Ovary (tissue), 10 donors: ENCODE measurements at regions of chr6 and their contacts with region 1.

Region 1: DNA sequence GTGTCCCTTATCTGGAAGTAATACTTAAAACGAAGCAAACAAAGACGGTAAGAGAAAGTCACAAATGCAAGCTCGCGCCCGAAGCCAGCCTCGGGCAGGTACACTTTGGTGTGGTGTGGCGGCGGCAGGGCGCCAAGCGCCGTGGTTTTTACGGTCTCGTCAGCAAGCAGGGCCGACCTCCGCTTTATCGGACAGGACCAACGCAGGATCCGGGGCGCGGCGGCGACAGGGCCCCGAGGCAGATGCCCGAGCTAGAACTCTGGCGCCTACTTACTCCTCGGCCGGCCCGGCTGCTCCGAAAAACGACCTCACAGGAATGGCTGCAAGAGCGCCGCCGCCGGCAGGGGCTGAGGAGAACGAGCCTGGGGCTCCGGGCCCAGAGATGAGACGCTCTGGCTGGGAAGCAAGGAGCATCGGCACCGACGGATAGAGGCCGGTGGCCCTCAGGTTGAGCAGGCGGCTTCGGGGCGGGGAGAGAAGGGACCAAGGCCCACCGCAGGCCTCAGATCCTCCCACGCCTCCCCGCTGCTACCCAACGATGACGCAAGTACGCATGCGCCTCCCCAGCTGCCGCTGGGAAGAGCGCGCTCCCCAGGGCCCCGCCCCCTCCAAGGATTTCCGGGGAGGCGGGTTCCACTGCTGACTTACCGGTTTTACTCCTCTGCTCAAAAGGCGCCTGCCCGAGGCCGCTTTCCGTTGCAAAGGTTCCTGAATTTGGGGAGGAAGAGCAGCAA is 60.6 kb downstream of the FAM217A start:
- DNase-seq: peak; percentile 95 to 96 (median 96)
- H3K4me3 ChIP-seq: peak overlapping the region; percentile 78
- H3K27ac ChIP-seq: peak overlapping the region; percentile 91 to 95
- H3K4me1 ChIP-seq: peaks cover 3% of the 10 kb centered on the region
- H3K27me3 ChIP-seq: no peaks in the 10 kb centered on the region
- CTCF ChIP-seq: peak in 2 of 3 donors; percentile 67 to 74
- EP300 ChIP-seq: no peak
- POLR2A ChIP-seq: peak; percentile 90

Region 2: GRCh38 chr6:4004249-4004648 is 14.1 kb before region 1 on chr6:
- intact Hi-C with region 1: no loop called
- DNase-seq: no peak
- H3K4me3 ChIP-seq: no peak overlapping the region
- H3K27ac ChIP-seq: no peak overlapping the region
- H3K4me1 ChIP-seq: no peaks in the 10 kb centered on the region
- H3K27me3 ChIP-seq: no peaks in the 10 kb centered on the region
- CTCF ChIP-seq: no peak
- EP300 ChIP-seq: no peak
- POLR2A ChIP-seq: no peak

Region 3: DNA sequence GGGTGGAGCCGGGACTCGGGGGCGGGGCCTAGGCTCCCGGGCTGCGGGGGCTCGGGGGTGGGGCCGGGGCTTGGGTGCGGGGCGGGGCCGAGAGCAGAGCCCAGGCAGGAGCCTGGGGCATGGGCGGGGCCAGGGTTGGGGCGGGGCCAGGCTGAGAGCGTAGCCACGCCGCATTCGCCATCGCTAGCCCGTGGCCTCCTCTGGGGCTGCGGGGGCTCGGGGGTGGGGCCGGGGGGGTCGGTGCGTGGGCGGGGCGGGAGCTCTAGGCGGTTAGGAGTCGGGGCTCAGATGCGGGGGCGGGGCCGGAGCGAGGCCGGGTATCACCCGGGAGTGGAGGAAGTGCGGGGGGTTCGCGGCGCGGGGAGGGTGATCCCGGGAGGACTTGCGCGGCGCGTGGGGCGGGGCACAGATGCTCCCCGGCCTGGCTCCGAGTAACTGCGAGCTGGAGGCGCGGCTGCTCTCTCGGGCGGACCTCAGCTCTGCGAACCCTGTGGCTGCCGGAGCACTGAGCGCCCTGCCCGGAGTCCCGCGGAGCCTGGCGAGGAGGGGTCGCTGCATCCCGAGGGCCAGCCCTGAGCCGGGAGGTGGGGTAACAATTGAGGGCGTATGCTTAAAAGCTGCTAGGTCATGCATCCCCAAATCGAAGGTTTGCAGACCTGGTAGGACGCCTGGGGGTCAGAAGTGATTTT is 117.5 kb after region 1 on chr6:
- intact Hi-C with region 1: loop called in 2 of 4 experiments (anchors 10 kb)
- DNase-seq: peak; percentile 98 to 99 (median 99)
- H3K4me3 ChIP-seq: peak overlapping the region; percentile 73
- H3K27ac ChIP-seq: peak overlapping the region; percentile 61 to 81
- H3K4me1 ChIP-seq: peaks cover 5% of the 10 kb centered on the region
- H3K27me3 ChIP-seq: no peaks in the 10 kb centered on the region
- CTCF ChIP-seq: no peak
- EP300 ChIP-seq: no peak
- POLR2A ChIP-seq: no peak